Sciatic nerve (tissue), 2 donors: ENCODE measurements at regions of chr1 and their contacts with region 1.

Region 1: DNA sequence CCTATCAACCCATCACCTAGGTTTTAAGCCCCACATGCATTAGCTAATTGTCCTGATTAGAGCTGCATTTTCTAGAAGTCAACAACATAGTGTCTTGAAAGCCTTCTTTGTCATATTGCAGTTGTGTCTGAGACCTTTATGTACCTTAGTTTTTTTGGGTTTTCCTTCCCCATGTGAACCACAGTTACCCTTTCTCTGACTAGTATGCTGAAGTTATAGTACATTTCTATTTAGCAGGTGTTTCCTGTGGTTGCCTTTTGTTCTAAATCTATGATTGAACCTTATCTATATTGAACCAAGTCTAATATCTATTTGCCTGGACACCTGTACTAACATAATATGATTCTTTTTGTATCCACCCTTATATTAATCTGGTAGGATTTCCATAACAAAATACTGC is 135.6 kb downstream of the ST6GALNAC3 start:
- DNase-seq: no peak
- ATAC-seq: no peak

Region 2: DNA sequence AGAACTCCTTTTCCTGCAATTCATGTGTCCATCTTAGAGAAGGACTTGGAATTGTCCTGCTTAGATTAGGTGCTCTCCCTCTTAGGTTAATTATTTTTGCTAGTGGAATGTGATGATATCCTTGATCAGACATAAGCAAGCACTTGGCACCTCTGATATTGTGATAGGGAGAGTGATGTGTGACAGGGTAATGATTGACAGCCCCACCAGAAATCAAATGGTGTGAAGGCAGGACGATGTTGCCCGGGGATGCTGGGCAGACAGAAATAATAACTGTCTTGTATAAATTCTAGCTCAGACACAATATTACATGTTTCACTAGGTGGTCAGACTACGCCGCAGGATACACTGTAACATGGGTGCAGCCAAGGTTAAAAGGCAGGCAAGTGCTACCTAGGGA is 1472.8 kb before region 1 on chr1:
- intact Hi-C with region 1: loop called (anchors 5 kb)
- DNase-seq: no peak
- ATAC-seq: no peak

Region 3: GRCh38 chr1:76158132-76158531 is 52.0 kb before region 1 on chr1:
- intact Hi-C with region 1: no loop called
- DNase-seq: no peak
- ATAC-seq: no peak

Region 4: DNA sequence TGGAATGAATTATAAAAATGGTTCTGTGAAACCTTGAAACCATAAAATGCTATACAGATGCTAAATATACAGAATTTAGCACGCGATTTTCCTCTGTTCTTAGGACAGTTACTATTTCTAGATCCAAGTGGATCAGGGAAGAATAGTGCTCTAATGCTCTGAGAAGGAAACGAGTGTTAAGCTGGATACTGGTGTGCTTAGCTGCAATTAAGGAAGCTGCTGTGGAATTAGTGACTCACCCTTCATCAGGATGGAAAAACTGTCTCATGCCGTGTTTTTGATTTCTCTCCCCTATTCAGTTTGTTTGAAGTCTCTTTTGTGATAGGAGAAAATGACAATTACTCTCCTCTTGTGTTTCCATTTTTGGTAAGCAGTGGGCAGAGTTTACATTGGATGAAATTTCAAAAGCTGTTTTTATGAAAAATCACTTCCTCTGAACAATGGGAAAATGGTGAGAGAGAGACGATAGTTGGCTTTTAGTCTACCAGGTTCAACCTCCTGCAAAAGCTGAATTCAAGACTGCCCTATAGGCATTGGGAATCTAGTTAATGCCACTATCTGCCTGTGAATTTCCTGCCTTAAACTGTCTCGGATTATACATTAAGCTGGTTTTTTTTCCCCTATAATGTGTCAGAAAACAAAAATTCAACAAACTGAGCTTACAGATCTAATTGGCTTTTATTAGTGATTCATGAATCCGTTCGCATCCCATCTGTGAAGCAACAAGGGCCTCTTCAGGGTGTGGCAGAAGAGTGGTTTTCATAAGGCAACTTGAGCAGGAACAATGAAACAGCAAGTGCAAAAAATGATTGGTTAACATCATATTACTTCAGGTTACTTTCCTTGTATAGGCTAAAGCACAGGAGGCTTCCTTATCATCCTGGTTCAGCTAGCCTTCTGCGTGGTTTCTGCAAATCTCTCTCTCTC is 44.2 kb after region 1 on chr1:
- intact Hi-C with region 1: no loop called
- DNase-seq: no peak
- ATAC-seq: peak; percentile 46